Calu3 (cell line): ENCODE measurements at regions of chr15 and their contacts with region 1.

Region 1: DNA sequence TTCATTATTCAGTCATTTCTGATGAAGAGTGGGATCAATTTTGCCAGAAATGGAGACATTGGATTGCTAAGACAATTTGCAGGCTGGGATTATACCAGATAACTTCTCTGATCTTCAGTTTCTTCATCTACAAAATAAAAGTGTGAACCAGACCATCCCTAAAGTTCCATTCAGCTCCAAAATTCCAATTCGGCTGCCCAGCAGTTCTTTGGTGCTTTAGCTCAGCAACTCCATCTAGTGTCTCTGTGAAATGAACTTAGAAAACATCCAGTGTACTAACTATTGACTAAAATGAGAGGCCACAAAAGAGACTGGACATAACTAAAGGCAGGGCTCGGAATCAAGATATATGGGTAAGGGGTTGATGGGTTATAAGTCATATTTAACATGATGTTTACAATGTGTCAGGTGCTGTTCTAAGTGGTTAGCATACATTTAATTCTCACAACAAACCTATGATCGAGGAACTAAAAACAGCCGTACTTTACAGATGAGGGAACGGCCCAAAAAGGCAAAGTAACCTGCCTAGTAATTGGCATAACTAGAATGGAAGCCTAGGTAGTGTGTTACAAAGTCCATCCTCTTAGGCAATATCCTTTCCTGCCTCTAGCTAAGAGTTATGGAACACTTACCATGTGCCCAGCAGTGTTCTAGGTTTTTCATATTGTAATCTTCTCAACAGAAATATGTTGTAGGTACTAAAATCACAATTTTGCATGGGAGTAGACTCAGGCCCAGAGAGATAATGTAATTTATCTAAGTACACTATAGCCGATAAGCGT is 17.0 kb downstream of the THAP10 start:
- DNase-seq: no peak
- H3K4me3 Mint-ChIP-seq: no peak overlapping the region
- H3K27ac Mint-ChIP-seq: no peak overlapping the region
- H3K4me1 Mint-ChIP-seq: peaks cover 17% of the 10 kb centered on the region
- H3K27me3 Mint-ChIP-seq: no peaks in the 10 kb centered on the region
- CTCF ChIP-seq: no peak

Region 2: GRCh38 chr15:70679919-70680231 is 195.3 kb before region 1 on chr15:
- CTCF ChIA-PET with region 1: interaction called, 5 read pairs
- intact Hi-C with region 1: loop called (anchors 2 kb)
- DNase-seq: no peak
- H3K4me3 Mint-ChIP-seq: no peak overlapping the region
- H3K27ac Mint-ChIP-seq: no peak overlapping the region
- H3K4me1 Mint-ChIP-seq: peaks cover 8% of the 10 kb centered on the region
- H3K27me3 Mint-ChIP-seq: no peaks in the 10 kb centered on the region
- CTCF ChIP-seq: no peak

Region 3: GRCh38 chr15:70729164-70729563 is 146.0 kb before region 1 on chr15:
- CTCF ChIA-PET with region 1: no interaction called
- intact Hi-C with region 1: no loop called
- DNase-seq: no peak
- H3K4me3 Mint-ChIP-seq: no peak overlapping the region
- H3K27ac Mint-ChIP-seq: no peak overlapping the region
- H3K4me1 Mint-ChIP-seq: no peaks in the 10 kb centered on the region
- H3K27me3 Mint-ChIP-seq: no peaks in the 10 kb centered on the region
- CTCF ChIP-seq: no peak

Region 4: GRCh38 chr15:70763120-70763878 is 111.9 kb before region 1 on chr15 and contains the start of gene UACA:
- CTCF ChIA-PET with region 1: no interaction called
- intact Hi-C with region 1: loop called (anchors 10 kb)
- DNase-seq: peak; percentile 99
- H3K4me3 Mint-ChIP-seq: peak within 1 kb of the TSS; percentile 94
- H3K27ac Mint-ChIP-seq: peak within 1 kb of the TSS; percentile 92
- H3K4me1 Mint-ChIP-seq: peaks cover 20% of the 10 kb centered on the region
- H3K27me3 Mint-ChIP-seq: no peaks in the 10 kb centered on the region
- CTCF ChIP-seq: no peak
- total RNA-seq, gene UACA: 31.9 and 35.5 TPM in 2 replicates

Region 5: DNA sequence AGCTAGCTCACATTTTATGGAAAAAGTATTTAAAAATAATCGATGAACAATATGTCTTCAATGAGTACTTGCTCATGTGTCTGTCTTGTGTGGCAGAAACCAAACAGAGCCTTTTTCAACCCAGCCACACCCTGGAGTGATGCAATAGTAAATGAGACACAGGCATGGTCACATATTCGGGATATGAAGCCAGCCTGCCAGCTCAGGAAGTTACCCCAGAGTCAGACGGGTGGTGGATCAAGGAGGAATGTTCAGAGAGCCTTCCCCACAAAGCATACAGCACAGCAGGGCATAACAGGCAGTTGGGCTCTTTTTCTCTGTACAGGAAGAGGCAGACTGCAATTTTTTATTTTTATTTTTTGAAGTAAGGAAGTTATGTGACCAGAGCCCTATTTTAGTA is 48.6 kb before region 1 on chr15:
- CTCF ChIA-PET with region 1: interaction called, 68 read pairs
- intact Hi-C with region 1: loop called (anchors 1 kb)
- DNase-seq: peak; percentile 58
- H3K4me3 Mint-ChIP-seq: no peak overlapping the region
- H3K27ac Mint-ChIP-seq: peak overlapping the region; percentile 4
- H3K4me1 Mint-ChIP-seq: peaks cover 55% of the 10 kb centered on the region
- H3K27me3 Mint-ChIP-seq: no peaks in the 10 kb centered on the region
- CTCF ChIP-seq: no peak